ENCODE measurements at regions of chr3 and their contacts with region 1.

Region 1: GRCh38 chr3:187802928-187803259 is 57.6 kb upstream of the BCL6 start:
- DNase-seq: peak; percentile 64
- ATAC-seq: peak; percentile 81
- H3K4me3 ChIP-seq: no peak overlapping the region
- H3K27ac ChIP-seq: no peak overlapping the region
- H3K4me1 ChIP-seq: peaks cover 33% of the 10 kb centered on the region
- H3K27me3 ChIP-seq: no peaks in the 10 kb centered on the region
- CTCF ChIP-seq: no peak
- EP300 ChIP-seq: peak; percentile 99 to 100
- POLR2A ChIP-seq: no peak
- RAD21 ChIP-seq: no peak

Region 2: GRCh38 chr3:187777331-187777941 is 25.5 kb before region 1 on chr3:
- CTCF ChIA-PET with region 1: no interaction called
- POLR2A ChIA-PET with region 1: interaction called, 4 read pairs
- RAD21 ChIA-PET with region 1: no interaction called
- SMC1A ChIA-PET with region 1: interaction called, 18 read pairs
- in situ Hi-C with region 1: no loop called
- intact Hi-C with region 1: loop called (anchors 1 kb)
- DNase-seq: peak; percentile 46
- ATAC-seq: peak; percentile 58
- H3K4me3 ChIP-seq: no peak overlapping the region
- H3K27ac ChIP-seq: no peak overlapping the region; the same call in 1 of the 2 replicates
- H3K4me1 ChIP-seq: peaks cover 27% of the 10 kb centered on the region
- H3K27me3 ChIP-seq: no peaks in the 10 kb centered on the region
- CTCF ChIP-seq: no peak
- EP300 ChIP-seq: peak in 1 of 2 experiments; percentile 33; a peak in 1 of 4 replicates
- POLR2A ChIP-seq: no peak
- RAD21 ChIP-seq: no peak

Region 3: GRCh38 chr3:187919048-187919447 is 116.2 kb after region 1 on chr3:
- CTCF ChIA-PET with region 1: interaction called, 4 read pairs
- POLR2A ChIA-PET with region 1: no interaction called
- RAD21 ChIA-PET with region 1: no interaction called
- SMC1A ChIA-PET with region 1: interaction called, 3 read pairs
- in situ Hi-C with region 1: no loop called
- intact Hi-C with region 1: loop called (anchors 5 kb)
- DNase-seq: peak; percentile 40
- ATAC-seq: peak; percentile 90
- H3K4me3 ChIP-seq: no peak overlapping the region
- H3K27ac ChIP-seq: no peak overlapping the region
- H3K4me1 ChIP-seq: peaks cover 18% of the 10 kb centered on the region
- H3K27me3 ChIP-seq: peaks cover 0 to 2% of the 10 kb centered on the region in 2 experiments; a peak in 1 of 4 replicates
- CTCF ChIP-seq: no peak
- EP300 ChIP-seq: 0 out of 4 replicates have a peak, but pooled peaks of 1 of the 2 experiments have one; percentile 55
- POLR2A ChIP-seq: no peak
- RAD21 ChIP-seq: 0 out of 2 replicates have a peak, but pooled peaks have one; percentile 3